ENCODE measurements at regions of chr11 and their contacts with region 1.

Region 1: GRCh38 chr11:36530840-36531239 is 20.8 kb upstream of the TRAF6 start:
- DNase-seq: no peak
- H3K4me3 ChIP-seq: no peak overlapping the region
- H3K27ac ChIP-seq: no peak overlapping the region
- H3K4me1 ChIP-seq: no peaks in the 10 kb centered on the region
- H3K27me3 ChIP-seq: no peaks in the 10 kb centered on the region
- CTCF ChIP-seq: no peak
- POLR2A ChIP-seq: no peak

Region 2: GRCh38 chr11:36098087-36098486 is 432.8 kb before region 1 on chr11:
- CTCF ChIA-PET with region 1: no interaction called
- POLR2A ChIA-PET with region 1: no interaction called
- dilution Hi-C with region 1: no loop called
- intact Hi-C with region 1: no loop called
- DNase-seq: no peak
- H3K4me3 ChIP-seq: no peak overlapping the region
- H3K27ac ChIP-seq: no peak overlapping the region
- H3K4me1 ChIP-seq: no peaks in the 10 kb centered on the region
- H3K27me3 ChIP-seq: no peaks in the 10 kb centered on the region
- CTCF ChIP-seq: no peak
- POLR2A ChIP-seq: no peak

Region 3: DNA sequence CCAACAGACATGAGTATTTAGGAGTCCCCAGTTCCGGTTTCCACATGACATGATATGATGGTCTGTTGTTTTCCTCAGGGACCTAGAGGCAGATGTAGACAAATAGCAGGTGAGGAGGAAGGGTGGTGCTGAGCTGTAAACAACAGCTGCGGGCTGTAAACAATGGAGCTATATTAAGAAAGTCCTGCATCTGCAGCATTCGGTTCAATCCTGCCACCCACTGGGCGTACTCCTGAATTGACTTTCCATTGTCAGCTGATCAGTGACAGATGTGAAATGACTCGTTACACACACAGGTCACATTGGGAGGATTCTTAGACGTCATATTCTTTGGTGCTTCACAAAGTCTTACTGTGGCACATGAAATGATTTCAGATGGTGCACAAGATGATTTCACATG is 10.2 kb after region 1 on chr11:
- CTCF ChIA-PET with region 1: interaction called, 10 read pairs
- POLR2A ChIA-PET with region 1: no interaction called
- dilution Hi-C with region 1: no loop called
- intact Hi-C with region 1: no loop called
- DNase-seq: peak; percentile 67
- H3K4me3 ChIP-seq: no peak overlapping the region
- H3K27ac ChIP-seq: no peak overlapping the region
- H3K4me1 ChIP-seq: peaks cover 3% of the 10 kb centered on the region
- H3K27me3 ChIP-seq: peaks cover 4 to 6% of the 10 kb centered on the region in 2 experiments
- CTCF ChIP-seq: peak; percentile 30 to 46
- POLR2A ChIP-seq: no peak